Activated CD4-positive, alpha-beta T cell treated with anti-CD3 and anti-CD28 coated beads, Interleukin-2, amount 10 ng/mL, durations not matched to agents 24 days and 14 days (primary cell): ENCODE measurements at regions of chr2 and their contacts with region 1.

Region 1: GRCh38 chr2:12501469-12502158 is 215.1 kb upstream of the TRIB2 start:
- DNase-seq: peak; percentile 94
- H3K4me3 Mint-ChIP-seq: peak overlapping the region; percentile 65
- H3K27ac Mint-ChIP-seq: peak overlapping the region; percentile 84
- H3K4me1 Mint-ChIP-seq: peaks cover 86% of the 10 kb centered on the region
- H3K27me3 Mint-ChIP-seq: no peaks in the 10 kb centered on the region

Region 2: DNA sequence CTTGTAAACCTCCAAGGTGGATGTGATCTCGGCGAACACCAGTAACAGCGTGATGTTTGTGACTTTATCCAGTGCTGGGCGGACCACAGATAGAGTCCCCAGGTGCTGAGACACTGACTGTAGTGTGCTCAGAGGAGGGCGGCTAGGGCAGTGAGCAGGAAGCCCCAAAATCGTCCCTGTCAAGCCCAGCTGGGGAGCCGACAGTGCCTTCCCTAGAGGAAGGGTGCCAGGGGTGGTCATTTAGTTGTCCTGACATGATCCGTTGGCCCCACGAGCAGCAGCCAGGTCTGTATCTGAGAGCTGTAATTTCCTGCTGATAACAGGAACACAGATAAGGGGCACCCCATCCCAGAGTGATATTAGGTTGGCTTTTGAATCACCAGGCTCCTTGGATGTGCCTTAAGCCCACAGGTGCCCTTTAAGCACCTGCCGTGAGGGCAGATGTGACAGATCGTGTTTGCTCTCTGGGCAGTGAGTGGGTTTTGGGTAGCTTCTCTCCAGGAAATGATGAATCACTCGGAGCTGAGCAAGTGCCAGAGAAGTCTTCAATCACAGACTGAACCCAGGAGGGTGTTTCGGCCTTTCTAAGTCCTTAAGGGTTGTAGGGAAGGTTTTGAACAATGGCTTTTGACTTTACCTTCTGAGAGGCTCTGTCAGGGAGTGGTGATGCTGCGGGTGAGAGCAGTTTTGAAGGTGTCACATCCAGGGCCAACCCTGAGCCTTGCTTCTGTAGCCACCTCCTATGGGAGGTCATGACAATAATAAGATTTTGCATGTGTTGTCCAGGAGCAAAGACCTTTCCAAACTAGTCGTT is 747.5 kb before region 1 on chr2:
- intact Hi-C with region 1: loop called (anchors 5 kb)
- DNase-seq: peak; percentile 87
- H3K4me3 Mint-ChIP-seq: peak overlapping the region; percentile 80
- H3K27ac Mint-ChIP-seq: peak overlapping the region; percentile 89
- H3K4me1 Mint-ChIP-seq: peaks cover 71% of the 10 kb centered on the region
- H3K27me3 Mint-ChIP-seq: no peaks in the 10 kb centered on the region

Region 3: DNA sequence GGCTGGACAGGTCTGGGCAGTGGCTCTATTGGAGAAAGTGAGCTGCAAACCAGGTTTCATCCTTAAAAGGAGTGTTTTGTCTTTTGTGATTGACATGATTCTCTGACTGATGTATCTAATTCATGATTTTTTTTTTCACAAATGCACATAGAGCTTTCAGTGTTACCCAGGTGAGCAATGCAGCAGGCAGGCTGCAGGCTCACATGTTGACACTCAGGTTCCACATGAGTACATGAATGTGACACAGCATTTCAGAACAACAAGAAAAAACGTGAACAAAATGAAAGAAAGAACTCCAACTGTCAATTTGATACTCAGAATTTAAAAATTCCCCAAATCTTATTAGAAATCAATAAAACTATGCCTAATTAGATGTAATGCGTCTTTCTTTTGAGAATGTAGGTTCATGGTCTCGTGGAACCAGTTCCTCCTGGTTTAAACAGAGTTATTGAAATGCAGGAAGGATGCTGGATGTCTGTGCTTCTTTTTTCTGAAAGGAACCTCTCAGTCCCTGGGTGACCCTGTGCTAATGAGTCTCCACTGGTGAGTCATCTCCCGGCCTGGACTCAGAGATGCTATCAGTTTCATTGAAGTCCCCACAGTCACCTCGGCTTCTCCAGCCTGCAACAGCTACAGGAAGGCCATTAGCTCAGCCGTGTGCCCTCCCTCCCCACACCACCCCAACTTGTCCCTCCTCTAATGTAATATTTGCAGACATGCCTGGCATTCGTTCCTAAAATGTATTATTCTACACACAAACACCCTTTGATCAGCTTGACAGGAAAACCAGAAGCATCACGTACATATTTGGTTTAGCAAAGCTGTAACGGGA is 324.8 kb before region 1 on chr2:
- intact Hi-C with region 1: loop called (anchors 5 kb)
- DNase-seq: peak; percentile 66
- H3K4me3 Mint-ChIP-seq: peak overlapping the region; percentile 2
- H3K27ac Mint-ChIP-seq: no peak overlapping the region
- H3K4me1 Mint-ChIP-seq: peaks cover 33% of the 10 kb centered on the region
- H3K27me3 Mint-ChIP-seq: peaks cover 7% of the 10 kb centered on the region

Region 4: DNA sequence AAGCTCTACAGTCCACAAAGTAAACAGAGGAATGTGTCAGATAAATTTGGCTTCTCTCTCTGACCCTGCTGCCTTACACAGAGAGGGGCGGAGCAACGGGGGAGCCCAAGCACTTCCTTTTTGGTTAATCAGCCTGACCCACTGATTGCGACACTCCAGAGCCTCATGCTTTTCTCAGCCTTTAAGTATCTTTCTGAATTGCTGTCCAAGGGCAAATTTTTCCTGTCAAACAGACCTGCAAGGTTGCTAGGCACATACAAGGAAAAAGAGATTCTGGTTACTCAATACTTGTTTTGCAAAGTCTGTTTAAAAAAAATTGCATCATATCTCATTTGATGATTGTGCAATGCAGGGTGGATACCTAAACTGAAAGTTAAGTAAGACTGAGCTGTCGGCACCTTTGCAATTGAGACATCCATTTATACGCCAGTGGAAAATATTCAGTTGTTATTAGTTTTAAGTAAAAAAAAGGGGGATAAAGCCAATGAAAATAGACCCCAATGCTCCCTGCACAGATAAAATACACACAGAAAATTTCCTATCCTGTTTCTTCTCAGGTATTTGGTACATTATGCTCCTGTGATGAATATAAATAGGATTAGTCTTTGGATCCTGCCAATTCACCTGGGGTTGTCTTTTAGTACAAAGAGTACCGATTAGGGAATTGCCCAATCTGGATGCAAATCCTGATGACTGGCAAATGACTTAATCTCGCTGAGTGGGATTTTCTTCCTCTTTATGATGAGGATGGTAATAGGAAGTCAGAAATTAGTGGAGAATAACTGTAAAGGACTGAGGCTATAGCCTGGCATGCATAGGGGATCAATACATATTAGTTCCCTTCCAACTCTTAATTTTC is 45.1 kb before region 1 on chr2:
- intact Hi-C with region 1: loop called (anchors 2 kb)
- DNase-seq: peak; percentile 85
- H3K4me3 Mint-ChIP-seq: peak overlapping the region; percentile 78
- H3K27ac Mint-ChIP-seq: peak overlapping the region; percentile 82
- H3K4me1 Mint-ChIP-seq: peaks cover 30% of the 10 kb centered on the region
- H3K27me3 Mint-ChIP-seq: no peaks in the 10 kb centered on the region

Region 5: DNA sequence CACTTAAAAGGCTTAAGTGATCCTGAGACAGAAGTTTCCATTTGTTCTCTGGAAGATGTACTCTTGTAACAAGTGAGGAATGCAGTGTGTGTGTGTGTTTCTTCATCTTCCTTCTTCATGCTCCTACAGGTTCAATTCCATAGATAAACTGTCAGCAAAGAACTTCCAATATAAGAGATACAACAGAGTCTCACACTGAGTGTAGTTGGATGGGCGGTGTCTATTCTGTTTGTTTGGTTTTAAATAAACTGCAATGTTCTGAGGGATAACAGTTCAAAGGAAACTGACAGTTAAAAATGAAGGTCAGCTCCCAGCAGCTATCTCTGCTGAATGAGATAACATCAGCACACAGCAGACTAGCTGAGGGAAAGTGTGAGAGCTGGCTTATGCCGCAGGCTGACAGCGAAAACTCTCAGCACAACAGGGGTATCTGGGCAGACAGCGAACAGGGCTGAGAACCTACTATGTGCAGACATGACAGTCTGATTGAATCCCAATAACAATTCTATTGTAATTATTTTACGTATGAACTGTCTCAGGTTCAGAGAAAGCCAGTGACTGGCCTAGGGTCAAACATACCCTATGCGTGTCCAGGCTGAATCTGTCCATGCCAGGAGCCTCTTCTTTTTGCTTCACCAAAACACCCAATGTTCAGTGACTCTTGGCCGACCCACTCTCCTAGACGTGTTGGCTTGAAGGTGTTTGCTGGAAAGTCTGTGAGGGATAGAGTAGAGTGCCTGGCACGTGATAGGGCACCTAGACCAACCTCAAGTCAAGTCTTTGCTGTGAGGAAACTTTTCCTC is 13.2 kb after region 1 on chr2:
- intact Hi-C with region 1: loop called (anchors 1 kb)
- DNase-seq: peak; percentile 81
- H3K4me3 Mint-ChIP-seq: peak overlapping the region; percentile 15
- H3K27ac Mint-ChIP-seq: no peak overlapping the region
- H3K4me1 Mint-ChIP-seq: peaks cover 37% of the 10 kb centered on the region
- H3K27me3 Mint-ChIP-seq: peaks cover 5% of the 10 kb centered on the region